Adrenal gland (tissue), 19 donors: ENCODE measurements at regions of chr5 and their contacts with region 1.

Region 1: DNA sequence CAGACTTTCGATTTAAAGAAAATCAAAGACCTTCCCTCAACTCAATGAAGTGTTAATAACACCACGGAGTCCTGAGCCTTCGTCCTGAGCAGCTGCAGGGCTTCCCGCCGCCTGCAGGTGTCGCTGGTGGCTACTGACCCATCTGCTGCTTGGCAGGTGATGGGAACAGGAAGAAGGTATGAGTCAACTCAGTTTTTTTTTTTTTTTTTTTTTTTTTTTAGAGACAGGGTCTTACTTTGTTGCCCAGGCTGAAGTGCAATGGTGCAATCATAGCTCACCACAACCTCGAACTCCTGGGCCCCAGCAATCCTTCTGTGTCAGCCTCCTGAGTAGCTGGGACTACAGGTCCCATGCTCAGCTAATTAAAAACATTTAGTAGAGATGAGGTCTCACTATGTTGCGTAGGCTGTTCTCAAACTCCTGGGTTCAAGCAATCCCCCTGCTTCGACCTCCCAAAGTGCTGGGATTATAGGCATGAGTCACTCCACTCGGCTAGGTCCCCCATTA is 185.7 kb upstream of the IL12B start:
- DNase-seq: peak; percentile 53 to 86 (median 71)
- H3K4me3 ChIP-seq: no peak overlapping the region
- H3K27ac ChIP-seq: no peak overlapping the region
- H3K4me1 ChIP-seq: no peaks in the 10 kb centered on the region
- H3K27me3 ChIP-seq: no peaks in the 10 kb centered on the region
- CTCF ChIP-seq: peak; percentile 75 to 87 (median 82)
- POLR2A ChIP-seq: no peak

Region 2: GRCh38 chr5:159915904-159916840 is 400.2 kb after region 1 on chr5 and contains the start of gene ADRA1B:
- intact Hi-C with region 1: loop called (anchors 5 to 10 kb)
- DNase-seq: peak; percentile 30 to 68 (median 61)
- H3K4me3 ChIP-seq: peak within 1 kb of the TSS in 1 of 4 donors; percentile 48
- H3K27ac ChIP-seq: peak within 1 kb of the TSS in 3 of 5 donors; percentile 57 to 88 (median 61)
- H3K4me1 ChIP-seq: peaks cover 9 to 22% of the 10 kb centered on the region in 2 donors
- H3K27me3 ChIP-seq: peaks cover 6% of the 10 kb centered on the region
- CTCF ChIP-seq: peak in 4 of 6 experiments; percentile 17 to 80 (median 66)
- POLR2A ChIP-seq: no peak
- total RNA-seq, gene ADRA1B: 1.5 to 12.1 (median 5.0) TPM in 8 of 9 donors, not detected in the other

Region 3: GRCh38 chr5:159987031-159987674 is 471.2 kb after region 1 on chr5:
- intact Hi-C with region 1: loop called in 1 of 2 experiments (anchors 10 kb)
- DNase-seq: peak; percentile 64 to 89 (median 80)
- H3K4me3 ChIP-seq: peak overlapping the region in 1 of 4 donors; percentile 53
- H3K27ac ChIP-seq: no peak overlapping the region
- H3K4me1 ChIP-seq: peaks cover 0 to 4% of the 10 kb centered on the region in 2 donors
- H3K27me3 ChIP-seq: peaks cover 15% of the 10 kb centered on the region
- CTCF ChIP-seq: peak; percentile 61 to 84 (median 71)
- POLR2A ChIP-seq: no peak